Activated CD4-positive, alpha-beta T cell treated with anti-CD3 and anti-CD28 coated beads, Interleukin-2, amount 10 ng/mL, durations not matched to agents 7 days and 5 days (primary cell): ENCODE measurements at regions of chr9 and their contacts with region 1.

Region 1: DNA sequence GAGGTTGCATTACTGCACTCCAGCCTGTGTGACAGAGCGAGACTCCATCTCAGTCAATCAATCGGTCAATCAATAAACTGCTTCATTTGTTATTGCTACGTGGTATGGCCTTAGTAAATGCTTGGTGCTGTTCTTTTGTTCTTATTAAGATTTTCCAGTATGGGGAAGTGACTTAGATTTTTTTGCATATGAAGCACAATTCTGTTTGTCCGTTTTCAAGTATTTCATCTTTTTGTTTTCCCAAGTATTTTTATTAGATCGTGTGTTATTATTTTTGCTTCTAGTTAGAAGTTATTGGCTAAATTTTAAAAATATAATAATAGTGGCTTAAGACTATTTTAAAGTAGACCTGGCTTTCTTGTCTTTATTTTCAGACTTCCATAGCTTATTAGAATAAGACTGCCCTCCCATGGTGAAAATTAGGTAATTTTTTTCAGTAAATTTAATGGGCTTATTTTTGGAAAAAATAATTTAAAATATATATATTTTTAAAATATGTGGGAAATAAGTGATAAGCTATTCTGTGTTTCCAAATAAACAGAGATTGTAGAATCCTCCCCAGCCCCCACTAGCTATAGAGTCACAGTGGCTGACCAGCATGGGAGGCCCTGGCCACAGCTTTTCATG is 14.7 kb upstream of the OMD start:
- DNase-seq: no peak
- H3K4me3 Mint-ChIP-seq: no peak overlapping the region
- H3K27ac Mint-ChIP-seq: no peak overlapping the region
- H3K4me1 Mint-ChIP-seq: peaks cover 10% of the 10 kb centered on the region
- H3K27me3 Mint-ChIP-seq: no peaks in the 10 kb centered on the region

Region 2: GRCh38 chr9:92407818-92408217 is 31.2 kb before region 1 on chr9:
- CTCF ChIA-PET with region 1: no interaction called
- POLR2A ChIA-PET with region 1: interaction called, 11 read pairs
- DNase-seq: no peak
- H3K4me3 Mint-ChIP-seq: no peak overlapping the region
- H3K27ac Mint-ChIP-seq: no peak overlapping the region
- H3K4me1 Mint-ChIP-seq: peaks cover 29% of the 10 kb centered on the region
- H3K27me3 Mint-ChIP-seq: no peaks in the 10 kb centered on the region